ENCODE measurements at regions of chr15 and their contacts with region 1.

Region 1: DNA sequence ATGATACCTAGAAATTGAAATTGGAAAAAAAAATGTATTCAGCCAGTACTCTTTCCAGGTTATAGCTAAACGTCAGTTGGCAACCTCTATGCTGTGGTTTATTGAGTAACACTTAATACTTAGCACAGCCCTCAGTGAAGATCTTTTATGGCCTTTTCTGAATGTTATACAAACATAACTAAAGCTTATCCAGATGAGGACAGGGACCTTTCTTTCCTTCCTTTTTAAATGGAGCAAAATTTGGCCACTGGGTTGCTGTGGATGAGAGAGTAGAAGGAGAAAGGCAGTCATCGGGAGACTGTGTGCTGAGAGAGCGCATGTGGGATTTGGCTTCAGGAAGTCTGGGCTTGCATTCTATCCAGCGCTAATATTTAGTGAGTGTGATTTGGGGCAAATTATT is 36.1 kb downstream of the IGF1R start:
- DNase-seq: no peak
- H3K4me3 ChIP-seq: no peak overlapping the region
- H3K27ac ChIP-seq: no peak overlapping the region
- H3K4me1 ChIP-seq: peaks cover 7 to 24% (median 20%) of the 10 kb centered on the region in 4 experiments
- H3K27me3 ChIP-seq: no peaks in the 10 kb centered on the region; a peak in 1 of 7 replicates
- CTCF ChIP-seq: no peak
- EP300 ChIP-seq: no peak
- POLR2A ChIP-seq: no peak
- RAD21 ChIP-seq: no peak

Region 2: DNA sequence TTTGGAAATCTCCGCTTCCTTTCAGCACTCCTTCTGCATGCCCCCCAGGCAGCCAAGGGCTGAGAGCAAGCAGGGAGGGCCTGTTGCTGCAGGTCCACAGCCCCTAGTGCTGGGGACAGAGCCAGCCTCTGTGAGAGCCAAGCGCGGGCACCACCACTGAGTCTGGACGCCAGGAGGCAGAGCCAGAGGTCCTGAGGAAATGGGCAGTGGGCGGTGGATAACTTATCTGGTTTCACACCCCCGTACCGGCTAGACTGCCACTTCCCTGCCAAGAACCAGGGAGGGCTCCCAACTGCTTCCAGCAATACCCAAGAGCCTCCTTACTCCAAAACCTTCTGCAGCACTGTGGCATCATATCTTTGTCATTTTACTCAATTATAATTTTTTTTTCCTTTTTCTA is 177.7 kb before region 1 on chr15:
- CTCF ChIA-PET with region 1: no interaction called
- POLR2A ChIA-PET with region 1: no interaction called
- DNase-seq: peak in 1 of 2 experiments; percentile 37
- H3K4me3 ChIP-seq: no peak overlapping the region
- H3K27ac ChIP-seq: no peak overlapping the region
- H3K4me1 ChIP-seq: no peaks in the 10 kb centered on the region
- H3K27me3 ChIP-seq: no peaks in the 10 kb centered on the region
- CTCF ChIP-seq: no peak
- EP300 ChIP-seq: no peak
- POLR2A ChIP-seq: no peak
- RAD21 ChIP-seq: no peak

Region 3: GRCh38 chr15:98703126-98703685 is 18.8 kb after region 1 on chr15:
- CTCF ChIA-PET with region 1: interaction called, 12 read pairs
- POLR2A ChIA-PET with region 1: interaction called, 3 read pairs
- DNase-seq: no peak
- H3K4me3 ChIP-seq: no peak overlapping the region
- H3K27ac ChIP-seq: no peak overlapping the region
- H3K4me1 ChIP-seq: peaks cover 2 to 30% (median 25%) of the 10 kb centered on the region in 4 experiments
- H3K27me3 ChIP-seq: no peaks in the 10 kb centered on the region
- CTCF ChIP-seq: no peak
- EP300 ChIP-seq: no peak
- POLR2A ChIP-seq: no peak
- RAD21 ChIP-seq: no peak

Measured in H1 (cell line).